ENCODE measurements at regions of chr13 and their contacts with region 1.

Region 1: DNA sequence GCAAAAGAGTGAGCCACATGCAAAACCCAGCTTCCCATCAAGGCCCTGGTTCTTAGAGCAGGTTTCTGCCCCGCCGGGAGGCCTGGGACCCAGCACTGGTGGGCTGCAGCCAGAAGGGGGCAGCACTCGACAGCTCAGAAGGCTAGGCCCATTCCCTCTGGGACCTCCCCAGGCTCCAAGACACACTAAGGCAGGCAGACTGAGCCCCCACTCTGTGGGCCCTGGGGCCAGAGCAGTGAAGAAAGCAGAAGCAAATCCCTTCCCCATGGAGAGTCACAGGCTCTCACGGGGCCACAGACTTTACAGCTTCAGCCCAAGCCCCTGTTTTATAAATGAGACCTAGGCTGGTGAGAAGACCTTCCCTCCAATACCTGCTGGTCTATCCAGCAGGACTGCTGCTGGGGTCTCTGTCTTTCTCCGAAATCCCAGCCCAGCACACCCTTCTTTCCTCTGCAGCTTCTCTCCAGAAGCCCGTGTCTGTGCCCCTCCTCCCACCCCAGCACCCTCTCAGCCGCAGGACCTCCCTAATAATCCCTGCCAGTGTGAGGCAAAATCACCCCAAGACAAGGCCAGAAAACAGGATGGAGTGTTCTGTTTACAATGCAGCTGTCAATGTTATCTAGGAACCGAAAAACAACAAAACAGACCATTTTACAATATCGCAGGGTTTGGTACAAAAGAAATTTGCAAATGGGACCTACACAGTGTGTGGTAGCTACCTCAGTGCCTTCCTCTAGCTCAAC is 109.3 kb downstream of the ABCC4 start:
- DNase-seq: peak; percentile 72 to 83
- H3K4me3 ChIP-seq: no peak overlapping the region
- H3K27ac ChIP-seq: peak overlapping the region; percentile 58 to 81 (median 80)
- H3K4me1 ChIP-seq: peaks cover 19 to 37% of the 10 kb centered on the region in 2 donors
- H3K27me3 ChIP-seq: no peaks in the 10 kb centered on the region
- CTCF ChIP-seq: peak; percentile 25 to 81 (median 72)
- POLR2A ChIP-seq: no peak

Region 2: GRCh38 chr13:95067303-95067702 is 124.7 kb before region 1 on chr13:
- intact Hi-C with region 1: no loop called
- DNase-seq: no peak
- H3K4me3 ChIP-seq: no peak overlapping the region
- H3K27ac ChIP-seq: no peak overlapping the region
- H3K4me1 ChIP-seq: no peaks in the 10 kb centered on the region
- H3K27me3 ChIP-seq: no peaks in the 10 kb centered on the region
- CTCF ChIP-seq: no peak
- POLR2A ChIP-seq: no peak

Region 3: GRCh38 chr13:95378603-95379002 is 186.6 kb after region 1 on chr13:
- intact Hi-C with region 1: loop called (anchors 2 kb)
- DNase-seq: no peak
- H3K4me3 ChIP-seq: no peak overlapping the region
- H3K27ac ChIP-seq: no peak overlapping the region
- H3K4me1 ChIP-seq: peaks cover 0 to 8% of the 10 kb centered on the region in 2 donors
- H3K27me3 ChIP-seq: no peaks in the 10 kb centered on the region
- CTCF ChIP-seq: no peak
- POLR2A ChIP-seq: no peak